SK-N-SH (cell line): ENCODE measurements at regions of chr1 and their contacts with region 1.

Region 1: DNA sequence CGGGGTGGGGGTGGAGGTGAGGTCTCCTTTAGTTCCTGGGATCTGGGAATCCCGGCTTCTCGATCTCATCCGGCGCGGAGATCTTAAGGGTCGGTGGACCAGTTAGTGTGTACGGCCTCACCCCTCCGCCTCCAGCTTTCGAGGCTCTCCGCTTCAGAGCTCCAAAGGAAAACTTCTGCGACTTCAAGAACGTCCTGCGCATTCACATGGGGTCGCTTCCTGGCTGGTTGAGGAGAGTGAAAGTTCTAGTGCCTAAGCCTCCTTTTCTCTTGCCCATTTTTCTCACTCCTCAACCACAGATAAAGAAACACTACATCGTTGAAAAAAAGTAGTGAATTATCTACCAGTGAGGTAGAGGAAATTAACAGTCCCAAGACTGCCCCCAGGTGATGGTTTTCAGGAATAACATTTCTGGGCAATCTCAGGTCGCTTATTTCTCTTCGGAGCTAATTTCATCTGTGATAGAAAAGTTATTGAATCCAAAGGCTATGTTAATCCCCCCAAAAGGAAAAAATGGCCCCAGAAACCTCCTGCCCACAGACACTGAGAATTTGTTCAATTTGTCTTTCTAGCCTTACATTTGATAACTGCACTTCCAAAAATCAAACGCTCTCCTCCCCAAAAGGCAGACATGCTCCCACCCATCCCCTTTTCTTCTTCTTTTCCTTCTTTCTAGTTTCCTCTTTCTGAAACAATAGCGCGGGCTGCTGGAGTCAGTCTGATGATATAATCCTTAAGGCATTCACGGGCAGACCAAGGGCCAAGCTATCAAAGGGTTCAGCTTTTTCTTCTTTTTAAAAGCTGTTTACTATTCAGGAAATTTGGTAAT is 20.6 kb upstream of the TBX15 start:
- DNase-seq: peak; percentile 73
- H3K4me3 ChIP-seq: peak overlapping the region in 1 of 2 experiments; percentile 42; a peak in 2 of 4 replicates
- H3K27ac ChIP-seq: no peak overlapping the region
- H3K4me1 ChIP-seq: no peaks in the 10 kb centered on the region; a peak in 1 of 4 replicates
- H3K27me3 ChIP-seq: peaks cover 46% of the 10 kb centered on the region
- CTCF ChIP-seq: peak; percentile 65
- EP300 ChIP-seq: no peak
- RAD21 ChIP-seq: peak; percentile 69

Region 2: GRCh38 chr1:118949315-118949714 is 59.4 kb before region 1 on chr1:
- CTCF ChIA-PET with region 1: interaction called, 10 read pairs
- POLR2A ChIA-PET with region 1: no interaction called
- DNase-seq: no peak
- H3K4me3 ChIP-seq: no peak overlapping the region
- H3K27ac ChIP-seq: no peak overlapping the region
- H3K4me1 ChIP-seq: no peaks in the 10 kb centered on the region
- H3K27me3 ChIP-seq: no peaks in the 10 kb centered on the region
- CTCF ChIP-seq: no peak
- EP300 ChIP-seq: no peak
- RAD21 ChIP-seq: no peak

Region 3: DNA sequence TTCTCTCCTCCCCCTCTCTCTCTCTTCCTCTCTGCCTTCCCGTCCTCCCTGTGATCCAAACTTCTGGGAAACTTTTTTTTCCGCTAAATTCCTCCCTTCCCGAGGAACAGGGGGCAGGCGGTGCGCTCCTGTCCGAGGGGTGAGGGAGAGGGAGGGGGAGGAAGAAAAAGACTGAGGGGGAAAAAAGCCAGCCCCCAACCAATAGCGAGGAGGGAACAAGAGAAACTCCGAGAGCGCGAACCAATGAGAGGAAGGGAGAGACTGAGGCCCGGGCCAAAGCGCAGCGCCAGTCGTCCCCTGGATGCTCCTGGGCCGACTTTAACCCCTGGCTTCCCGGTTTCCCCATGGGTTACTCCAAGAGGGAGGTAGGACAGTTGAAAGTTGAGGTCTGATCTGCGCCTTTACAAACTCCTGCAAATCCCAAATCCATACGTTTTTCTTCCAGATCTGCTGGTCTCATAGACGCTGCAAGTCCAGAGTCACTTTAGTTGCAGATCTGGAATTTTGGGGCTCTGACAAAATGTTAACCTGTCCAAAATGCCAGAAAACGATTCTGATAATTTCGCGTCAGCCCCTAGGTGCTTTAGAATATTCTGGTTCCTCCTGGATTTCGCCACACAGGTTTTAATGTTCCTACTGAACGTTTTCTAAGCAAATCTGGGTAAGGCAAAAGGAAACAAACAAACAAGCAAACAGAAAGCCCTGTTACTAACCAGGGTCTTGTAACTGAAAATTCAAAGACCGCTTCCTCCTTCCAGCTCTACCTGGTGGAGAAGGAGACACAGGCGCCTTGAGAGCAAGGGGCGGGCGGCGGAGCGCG is 20.3 kb before region 1 on chr1 and contains the start of gene TBX15:
- CTCF ChIA-PET with region 1: interaction called, 19 read pairs
- POLR2A ChIA-PET with region 1: no interaction called
- DNase-seq: no peak
- H3K4me3 ChIP-seq: peak within 1 kb of the TSS; percentile 24 to 54
- H3K27ac ChIP-seq: no peak within 1 kb of the TSS
- H3K4me1 ChIP-seq: no peaks in the 10 kb centered on the region; a peak in 1 of 4 replicates
- H3K27me3 ChIP-seq: peaks cover 100% of the 10 kb centered on the region
- CTCF ChIP-seq: no peak
- EP300 ChIP-seq: no peak
- RAD21 ChIP-seq: no peak
- polyA plus RNA-seq, gene TBX15: 0.02 TPM in 1 of 2 replicates, not detected in the other

Region 4: DNA sequence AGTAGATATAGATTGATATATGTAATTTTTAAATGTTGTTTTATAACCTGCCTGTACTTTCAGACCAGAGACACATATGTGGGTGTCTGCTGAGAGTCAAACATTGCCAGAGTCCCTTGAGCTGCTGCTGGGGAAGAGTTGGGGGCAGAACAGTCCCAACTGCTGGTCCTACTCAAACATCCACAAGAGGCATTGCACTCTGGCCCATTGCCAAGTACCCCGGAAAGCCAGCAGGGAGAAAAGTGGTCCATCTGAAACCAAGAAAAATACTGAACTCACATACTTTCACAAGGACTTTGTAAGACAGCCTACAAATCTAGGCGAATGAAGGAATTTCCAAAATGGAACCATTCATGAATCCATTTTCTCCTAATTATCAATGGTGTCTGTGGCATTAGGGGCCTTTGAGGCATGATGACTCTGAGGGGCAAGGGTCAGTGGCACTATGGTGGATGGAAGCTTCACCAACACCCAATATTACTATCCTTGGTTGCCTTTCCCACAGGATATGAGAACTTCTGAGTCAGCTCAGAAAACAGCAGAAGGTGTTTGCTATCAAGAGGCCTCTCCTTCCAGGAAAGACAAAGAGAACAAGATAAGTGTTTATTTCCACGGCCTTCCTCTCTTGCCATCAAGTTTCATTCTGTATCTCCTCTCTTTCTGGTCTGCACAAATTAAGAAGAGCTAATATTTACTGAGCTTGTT is 13.2 kb before region 1 on chr1:
- CTCF ChIA-PET with region 1: interaction called, 19 read pairs
- POLR2A ChIA-PET with region 1: no interaction called
- DNase-seq: no peak
- H3K4me3 ChIP-seq: no peak overlapping the region
- H3K27ac ChIP-seq: no peak overlapping the region
- H3K4me1 ChIP-seq: no peaks in the 10 kb centered on the region
- H3K27me3 ChIP-seq: peaks cover 88% of the 10 kb centered on the region
- CTCF ChIP-seq: no peak
- EP300 ChIP-seq: no peak
- RAD21 ChIP-seq: no peak